Activated CD8-positive, alpha-beta T cell treated with anti-CD3 and anti-CD28 coated beads, Interleukin-2, amount 10 ng/mL, durations not matched to agents 7 days and 5 days (primary cell): ENCODE measurements at regions of chr2 and their contacts with region 1.

Region 1: DNA sequence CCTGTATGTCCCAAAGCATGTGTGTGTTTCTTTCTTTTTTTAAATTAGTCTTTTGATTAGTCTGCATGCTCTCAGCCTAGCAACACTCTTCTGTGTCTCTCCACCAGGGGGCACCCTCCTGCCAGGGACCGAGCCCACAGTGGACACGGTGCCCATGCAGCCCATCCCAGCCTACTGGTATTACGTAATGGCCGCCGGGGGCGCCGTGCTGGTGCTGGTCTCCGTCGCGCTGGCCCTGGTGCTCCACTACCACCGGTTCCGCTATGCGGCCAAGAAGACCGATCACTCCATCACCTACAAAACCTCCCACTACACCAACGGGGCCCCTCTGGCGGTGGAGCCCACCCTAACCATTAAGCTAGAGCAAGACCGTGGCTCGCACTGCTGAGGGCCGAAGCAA is 93.8 kb downstream of the NRP2 start:
- DNase-seq: peak; percentile 55
- ATAC-seq: peak; percentile 49
- H3K4me3 Mint-ChIP-seq: no peak overlapping the region
- H3K27ac Mint-ChIP-seq: no peak overlapping the region
- H3K4me1 Mint-ChIP-seq: peaks cover 8% of the 10 kb centered on the region
- H3K27me3 Mint-ChIP-seq: peaks cover 29% of the 10 kb centered on the region

Region 2: DNA sequence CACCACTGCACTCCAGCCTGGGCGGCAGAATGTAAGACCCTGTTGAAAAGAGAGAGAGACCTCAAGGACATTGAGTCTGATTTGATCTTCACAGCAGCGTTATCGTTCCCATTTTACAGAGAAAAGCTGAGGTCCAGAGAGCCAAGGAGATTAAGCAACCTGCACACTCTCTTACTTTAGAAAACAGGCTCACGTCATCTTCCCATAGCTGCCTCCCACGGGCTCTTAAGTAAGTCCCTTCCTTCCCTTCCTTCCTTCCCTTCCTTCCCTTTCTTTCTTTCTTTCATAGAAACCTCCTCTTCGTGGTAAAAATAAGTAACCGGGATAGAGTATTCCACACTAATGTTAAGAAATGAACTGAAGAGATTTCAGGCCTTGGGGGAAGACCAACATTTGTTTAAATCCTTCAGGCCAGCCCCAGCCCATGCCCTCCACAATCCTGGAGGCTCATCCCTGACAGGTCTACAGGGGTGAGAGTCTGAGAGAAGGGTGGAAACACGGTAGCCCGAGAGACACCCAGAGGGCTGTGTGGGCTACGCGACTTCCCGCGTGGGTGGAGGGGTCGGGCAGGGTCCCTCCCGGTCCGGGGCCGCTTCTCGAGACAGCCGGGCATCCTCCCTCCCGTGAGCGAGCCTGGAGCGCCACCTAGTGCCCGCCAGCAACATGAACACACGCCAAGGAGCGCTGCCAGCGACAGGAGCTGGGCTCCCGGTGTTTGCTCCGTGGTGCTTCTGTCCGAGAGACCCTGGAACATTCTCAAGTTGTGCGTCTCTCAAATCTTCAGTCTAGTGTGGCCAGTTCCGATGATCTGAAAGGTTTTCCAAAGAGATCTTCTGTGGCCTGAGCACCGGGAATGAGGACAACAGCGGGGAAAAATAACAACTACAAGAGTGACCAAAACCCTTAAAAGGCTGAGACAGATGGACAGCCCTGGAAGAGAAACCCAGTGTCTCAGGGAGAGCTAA is 149.5 kb after region 1 on chr2:
- CTCF ChIA-PET with region 1: interaction called, 17 read pairs
- POLR2A ChIA-PET with region 1: no interaction called
- DNase-seq: peak; percentile 75
- ATAC-seq: peak; percentile 96
- H3K4me3 Mint-ChIP-seq: no peak overlapping the region
- H3K27ac Mint-ChIP-seq: no peak overlapping the region
- H3K4me1 Mint-ChIP-seq: peaks cover 5% of the 10 kb centered on the region
- H3K27me3 Mint-ChIP-seq: peaks cover 27% of the 10 kb centered on the region